Tibial artery (tissue), 4 donors: ENCODE measurements at regions of chr16 and their contacts with region 1.

Region 1: DNA sequence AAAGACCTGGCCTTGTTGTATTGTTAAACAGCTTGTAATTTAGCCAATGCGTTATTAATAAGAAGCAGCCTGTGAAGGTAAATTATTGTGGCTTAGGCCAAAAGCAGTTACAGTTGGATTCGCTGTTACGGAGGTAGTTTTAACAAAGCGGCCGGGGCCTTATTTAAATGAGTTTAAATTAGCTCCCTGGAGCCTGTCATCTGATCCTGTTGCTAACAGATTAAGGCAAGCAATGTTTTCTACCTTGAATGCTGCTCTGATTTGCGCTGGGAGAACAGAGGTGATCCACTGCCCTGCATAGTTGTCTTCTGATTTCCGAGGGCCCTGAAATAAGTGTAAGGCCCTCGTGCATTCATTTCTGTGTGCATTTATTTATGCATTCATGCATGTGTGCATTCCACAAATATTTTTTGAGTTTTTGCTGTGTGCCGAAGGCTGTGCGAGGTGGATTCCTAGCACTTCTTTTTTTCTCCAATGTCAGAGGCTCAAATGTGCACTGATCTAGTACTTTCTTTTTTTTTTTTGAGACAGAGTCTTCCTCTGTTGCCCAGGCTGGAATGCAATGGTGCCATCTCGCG is 10.8 kb downstream of the SEC14L5 start:
- DNase-seq: no peak
- H3K4me3 ChIP-seq: no peak overlapping the region
- H3K27ac ChIP-seq: no peak overlapping the region
- H3K4me1 ChIP-seq: no peaks in the 10 kb centered on the region
- H3K27me3 ChIP-seq: peaks cover 0 to 32% of the 10 kb centered on the region in 2 donors
- CTCF ChIP-seq: no peak

Region 2: DNA sequence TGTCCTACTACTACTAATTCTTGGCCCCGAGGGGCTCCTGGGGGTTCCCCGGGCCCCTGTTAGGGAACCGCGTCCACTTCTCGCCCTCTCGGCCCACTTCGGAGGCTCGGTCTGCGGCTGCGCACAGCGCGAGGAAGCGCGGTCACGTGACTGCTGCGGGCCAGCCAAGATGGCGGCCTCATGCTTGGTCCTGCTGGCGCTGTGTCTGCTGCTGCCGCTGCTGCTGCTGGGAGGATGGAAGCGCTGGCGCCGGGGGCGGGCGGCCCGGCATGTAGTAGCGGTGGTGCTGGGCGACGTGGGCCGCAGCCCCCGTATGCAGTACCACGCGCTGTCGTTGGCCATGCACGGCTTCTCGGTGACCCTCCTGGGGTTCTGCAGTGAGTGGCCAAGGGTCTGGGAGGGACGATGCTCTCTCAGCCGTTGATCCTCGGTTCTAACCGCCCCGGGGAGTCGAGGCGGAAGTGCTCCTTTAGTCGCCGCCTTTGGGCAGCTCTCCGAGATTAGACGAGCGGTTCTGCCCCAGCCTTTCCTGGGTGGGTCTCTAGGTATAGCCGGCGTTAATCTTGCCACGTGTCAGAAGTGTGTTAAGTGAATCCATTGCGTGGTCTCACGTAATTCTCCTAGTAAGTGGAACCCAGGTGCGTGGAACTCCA is 102.8 kb after region 1 on chr16 and contains the start of gene ALG1:
- intact Hi-C with region 1: loop called (anchors 10 kb)
- DNase-seq: peak; percentile 89 to 93
- H3K4me3 ChIP-seq: peak within 1 kb of the TSS; percentile 67 to 85
- H3K27ac ChIP-seq: peak within 1 kb of the TSS; percentile 81 to 83
- H3K4me1 ChIP-seq: peaks cover 0 to 17% (median 6%) of the 10 kb centered on the region in 4 donors
- H3K27me3 ChIP-seq: no peaks in the 10 kb centered on the region
- CTCF ChIP-seq: no peak